ENCODE measurements at regions of chr14 and their contacts with region 1.

Region 1: DNA sequence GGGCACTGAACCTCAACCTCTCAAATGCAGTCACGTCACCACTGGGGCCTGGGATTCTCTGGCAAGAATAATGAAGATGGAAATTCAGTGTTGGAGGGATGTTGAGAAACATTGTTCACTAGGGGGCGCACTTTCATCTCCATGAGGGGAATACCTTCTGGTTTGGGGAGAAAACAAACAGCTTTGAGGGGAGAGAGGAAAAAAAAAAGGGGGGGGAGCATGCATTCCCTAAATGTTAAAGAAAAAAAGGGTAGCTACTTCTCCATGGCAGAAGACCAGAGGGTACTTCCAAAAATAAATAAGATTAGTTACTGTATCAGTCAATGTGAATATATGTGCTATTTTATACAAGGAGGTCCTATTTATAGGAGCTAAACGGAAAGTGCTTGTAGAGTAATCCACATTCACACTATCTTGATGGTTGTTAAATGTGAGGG is 5.8 kb upstream of the TBPL2 start:
- DNase-seq: peak; percentile 42
- H3K4me3 ChIP-seq: no peak overlapping the region
- H3K27ac ChIP-seq: peak overlapping the region; percentile 55
- H3K27me3 ChIP-seq: no peaks in the 10 kb centered on the region
- CTCF ChIP-seq: peak; percentile 80

Region 2: GRCh38 chr14:55107766-55108554 is 338.3 kb before region 1 on chr14:
- CTCF ChIA-PET with region 1: no interaction called
- POLR2A ChIA-PET with region 1: no interaction called
- DNase-seq: peak; percentile 93
- H3K4me3 ChIP-seq: peak overlapping the region; percentile 38
- H3K27ac ChIP-seq: peak overlapping the region; percentile 100
- H3K27me3 ChIP-seq: no peaks in the 10 kb centered on the region
- CTCF ChIP-seq: no peak

Region 3: GRCh38 chr14:55470025-55470424 is 23.8 kb after region 1 on chr14:
- CTCF ChIA-PET with region 1: interaction called, 12 read pairs
- POLR2A ChIA-PET with region 1: no interaction called
- DNase-seq: no peak
- H3K4me3 ChIP-seq: no peak overlapping the region
- H3K27ac ChIP-seq: no peak overlapping the region
- H3K27me3 ChIP-seq: peaks cover 27% of the 10 kb centered on the region
- CTCF ChIP-seq: no peak

Region 4: DNA sequence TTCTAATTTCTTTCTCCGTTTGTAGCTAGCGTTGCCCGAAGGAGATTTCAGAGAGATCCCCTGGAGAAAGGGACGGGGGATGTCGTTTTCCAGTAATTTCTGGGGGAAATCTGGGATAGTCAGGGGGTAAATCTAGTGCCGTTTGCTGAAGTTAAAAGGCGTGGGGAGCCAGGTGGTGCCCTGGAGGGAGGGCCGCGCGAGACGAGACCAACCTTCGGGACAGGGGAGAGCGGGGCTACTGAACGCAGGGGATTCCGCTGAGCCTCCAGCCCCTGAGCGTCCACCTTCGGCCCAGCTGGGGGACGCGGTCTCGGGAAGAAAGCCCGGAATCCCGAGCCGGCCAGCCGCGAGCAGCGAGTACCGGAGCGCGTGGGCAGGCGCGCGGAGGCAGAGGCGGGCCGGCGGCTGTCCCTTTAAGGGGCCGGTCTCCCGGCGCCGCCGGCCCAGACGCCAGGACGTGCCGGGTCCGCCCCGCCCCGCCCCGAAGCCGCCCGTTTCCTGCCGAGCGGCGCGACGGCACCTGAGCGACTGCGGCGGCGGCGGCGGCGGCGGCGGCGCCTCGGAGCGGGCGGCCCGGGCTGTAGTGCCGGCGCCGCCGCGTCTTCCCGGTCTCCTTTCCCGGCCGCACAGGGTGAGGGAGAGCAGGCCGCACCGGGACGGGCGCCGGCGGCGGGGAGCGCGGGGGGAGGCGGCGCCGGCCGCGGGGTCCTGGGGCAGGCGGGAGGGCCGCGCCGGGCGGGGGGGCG is 133.7 kb after region 1 on chr14 and contains the start of gene KTN1:
- CTCF ChIA-PET with region 1: interaction called, 18 read pairs
- POLR2A ChIA-PET with region 1: no interaction called
- DNase-seq: no peak
- H3K4me3 ChIP-seq: peak within 1 kb of the TSS; percentile 79
- H3K27ac ChIP-seq: peak within 1 kb of the TSS; percentile 49
- H3K27me3 ChIP-seq: no peaks in the 10 kb centered on the region
- CTCF ChIP-seq: no peak
- polyA plus RNA-seq, gene KTN1: 69.7 and 129 TPM in 2 replicates

Region 5: GRCh38 chr14:55599200-55599879 is 153.1 kb after region 1 on chr14:
- CTCF ChIA-PET with region 1: interaction called, 17 read pairs
- POLR2A ChIA-PET with region 1: no interaction called
- DNase-seq: no peak
- H3K4me3 ChIP-seq: no peak overlapping the region
- H3K27ac ChIP-seq: no peak overlapping the region
- H3K27me3 ChIP-seq: no peaks in the 10 kb centered on the region
- CTCF ChIP-seq: no peak

Region 6: GRCh38 chr14:55638665-55639064 is 192.4 kb after region 1 on chr14:
- CTCF ChIA-PET with region 1: interaction called, 19 read pairs
- POLR2A ChIA-PET with region 1: no interaction called
- DNase-seq: no peak
- H3K4me3 ChIP-seq: no peak overlapping the region
- H3K27ac ChIP-seq: no peak overlapping the region
- H3K27me3 ChIP-seq: no peaks in the 10 kb centered on the region
- CTCF ChIP-seq: no peak

Region 7: GRCh38 chr14:55752586-55753390 is 306.6 kb after region 1 on chr14:
- CTCF ChIA-PET with region 1: no interaction called
- POLR2A ChIA-PET with region 1: no interaction called
- DNase-seq: peak; percentile 24
- H3K4me3 ChIP-seq: no peak overlapping the region
- H3K27ac ChIP-seq: no peak overlapping the region
- H3K27me3 ChIP-seq: peaks cover 5% of the 10 kb centered on the region
- CTCF ChIP-seq: no peak

Region 8: DNA sequence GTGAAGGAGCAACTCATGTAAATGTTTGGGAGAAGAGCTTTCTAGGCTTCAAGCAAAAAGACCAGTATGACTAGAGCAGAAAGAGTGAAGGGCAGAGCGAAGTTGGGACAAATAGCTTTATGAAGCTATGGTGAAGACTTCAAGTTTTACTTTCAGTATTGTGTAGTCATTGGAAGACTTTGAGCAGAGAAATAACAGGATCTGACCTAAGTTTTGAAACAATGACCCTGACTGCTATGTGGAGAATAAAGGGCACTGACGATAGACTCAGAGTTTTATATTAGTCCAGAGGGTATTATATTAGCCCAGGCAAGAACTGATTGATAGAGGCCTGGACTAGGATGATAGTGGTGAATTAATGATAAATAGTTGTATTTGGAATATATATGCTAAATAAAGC is 321.1 kb after region 1 on chr14:
- CTCF ChIA-PET with region 1: no interaction called
- POLR2A ChIA-PET with region 1: no interaction called
- DNase-seq: no peak
- H3K4me3 ChIP-seq: no peak overlapping the region
- H3K27ac ChIP-seq: no peak overlapping the region
- H3K27me3 ChIP-seq: peaks cover 9% of the 10 kb centered on the region
- CTCF ChIP-seq: no peak

Region 9: GRCh38 chr14:56474419-56475022 is 1028.3 kb after region 1 on chr14:
- CTCF ChIA-PET with region 1: interaction called, 22 read pairs
- POLR2A ChIA-PET with region 1: no interaction called
- DNase-seq: no peak
- H3K4me3 ChIP-seq: no peak overlapping the region
- H3K27ac ChIP-seq: no peak overlapping the region
- H3K27me3 ChIP-seq: peaks cover 8% of the 10 kb centered on the region
- CTCF ChIP-seq: peak; percentile 93

Measured in AG04450 (cell line).